ENCODE measurements at regions of chr9 and their contacts with region 1.

Region 1: GRCh38 chr9:113376634-113377567 is at the start of gene HDHD3:
- DNase-seq: peak; percentile 78
- H3K4me3 Mint-ChIP-seq: peak within 1 kb of the TSS; percentile 85
- H3K27ac Mint-ChIP-seq: peak within 1 kb of the TSS; percentile 65
- H3K4me1 Mint-ChIP-seq: peaks cover 9% of the 10 kb centered on the region
- H3K27me3 Mint-ChIP-seq: no peaks in the 10 kb centered on the region
- total RNA-seq, gene HDHD3: 18.7 and 18.8 TPM in 2 replicates

Region 2: DNA sequence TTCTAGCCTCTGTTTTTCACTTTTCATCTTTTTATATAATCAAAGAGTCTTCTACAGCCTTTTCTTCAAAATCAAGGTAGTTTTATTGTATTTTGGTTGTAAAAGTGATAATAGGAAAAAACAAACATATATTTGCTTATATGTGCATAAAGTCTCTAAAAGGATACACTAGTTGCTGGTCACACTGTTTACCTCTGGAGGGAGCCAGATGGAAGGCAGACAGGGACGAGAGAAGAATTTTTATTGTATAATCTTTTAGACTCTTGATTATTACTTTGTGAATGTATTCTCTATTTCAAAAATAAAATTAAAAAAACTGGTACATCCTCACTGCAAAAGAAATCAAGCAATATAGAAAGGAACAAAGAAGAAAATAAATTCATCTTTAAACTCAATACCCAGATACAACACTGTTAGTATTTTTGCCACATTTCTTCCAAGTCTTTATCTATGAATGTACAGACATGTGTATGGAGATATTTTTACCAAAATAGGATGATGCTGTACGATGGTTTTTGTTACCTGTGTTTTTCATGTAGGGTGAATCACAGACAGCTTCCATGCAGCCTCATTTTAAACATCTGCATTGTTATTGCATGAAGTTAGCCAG is 67.6 kb before region 1 on chr9:
- intact Hi-C with region 1: loop called (anchors 2 kb)
- DNase-seq: no peak
- H3K4me3 Mint-ChIP-seq: no peak overlapping the region
- H3K27ac Mint-ChIP-seq: no peak overlapping the region
- H3K4me1 Mint-ChIP-seq: peaks cover 12% of the 10 kb centered on the region
- H3K27me3 Mint-ChIP-seq: peaks cover 3% of the 10 kb centered on the region

Region 3: DNA sequence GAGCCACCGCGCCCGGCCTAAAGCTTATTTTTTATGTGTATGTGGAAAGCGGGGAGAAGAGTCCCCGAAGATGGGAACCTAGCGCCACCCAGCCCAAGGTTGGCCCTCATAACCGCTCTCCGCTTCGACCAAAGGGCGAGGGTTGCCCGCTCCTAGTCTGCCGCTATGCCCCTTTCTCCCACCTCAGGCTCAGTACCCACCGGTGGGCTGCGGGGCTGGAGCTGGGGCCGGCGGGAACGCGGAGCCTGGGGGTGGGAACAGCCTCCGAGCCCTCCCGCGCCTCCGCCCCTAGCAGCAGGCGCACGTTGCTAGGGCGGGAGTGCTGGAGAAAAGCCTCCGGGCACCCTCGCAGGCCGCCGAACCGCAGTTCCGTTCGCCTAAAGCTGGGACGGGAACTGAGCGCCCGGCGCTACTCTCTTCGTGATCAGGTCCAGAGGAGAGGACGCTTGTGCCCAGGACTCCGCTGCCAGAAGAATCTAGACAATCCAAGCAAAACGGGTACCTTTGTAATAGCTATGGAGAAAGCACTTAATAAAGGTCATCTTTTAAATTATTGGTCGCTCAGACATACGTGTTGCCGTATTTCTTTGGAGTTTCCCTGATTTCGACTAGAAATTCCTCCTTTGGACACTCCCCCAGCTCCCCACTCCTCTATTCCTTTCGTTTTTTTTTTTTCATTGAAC is 36.7 kb before region 1 on chr9 and contains the start of gene WDR31:
- intact Hi-C with region 1: loop called (anchors 2 kb)
- DNase-seq: peak; percentile 75
- H3K4me3 Mint-ChIP-seq: peak within 1 kb of the TSS; percentile 86
- H3K27ac Mint-ChIP-seq: peak within 1 kb of the TSS; percentile 56
- H3K4me1 Mint-ChIP-seq: peaks cover 37% of the 10 kb centered on the region
- H3K27me3 Mint-ChIP-seq: no peaks in the 10 kb centered on the region
- total RNA-seq, gene WDR31: 1.9 and 2.1 TPM in 2 replicates

Region 4: DNA sequence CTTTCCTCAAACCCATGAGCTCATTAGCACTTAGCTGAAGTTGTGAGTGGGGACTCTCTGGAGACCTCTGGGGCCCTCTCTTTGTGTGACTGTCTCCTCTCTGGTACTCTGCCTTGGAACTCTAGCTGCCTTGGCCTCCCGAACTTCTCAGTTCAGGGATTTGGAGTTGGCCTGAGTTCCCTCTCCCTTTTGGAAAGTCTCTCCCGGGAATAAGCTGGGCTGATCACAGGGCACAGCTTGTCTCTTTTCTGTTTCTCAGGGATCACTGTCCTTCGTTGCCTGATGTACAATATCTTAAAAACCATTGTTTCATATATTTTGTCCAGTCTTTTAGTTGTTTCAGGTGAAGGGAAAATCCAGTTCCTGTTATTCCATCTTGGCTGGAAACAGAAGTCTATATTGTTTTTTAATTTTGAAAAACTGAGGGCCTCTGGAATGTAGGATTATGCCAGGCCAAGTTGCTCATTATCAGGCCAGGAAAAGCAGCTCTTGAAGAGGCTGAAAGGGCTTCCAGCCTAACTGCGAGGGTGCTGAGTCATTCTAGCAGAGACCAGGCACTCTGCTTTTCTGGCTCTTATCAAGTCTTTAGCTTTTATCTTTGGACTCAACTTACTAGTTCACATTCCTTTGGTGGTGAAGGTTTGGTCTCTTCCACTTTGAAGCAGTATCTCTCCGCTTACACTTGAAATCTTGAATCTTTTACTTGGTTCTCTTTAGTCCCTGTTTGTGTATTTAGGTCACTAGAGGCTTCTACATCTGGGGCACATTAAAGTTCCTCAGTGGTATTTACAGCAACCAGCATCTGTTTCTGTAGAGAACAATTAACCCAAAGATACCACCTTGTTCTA is 78.2 kb after region 1 on chr9:
- intact Hi-C with region 1: no loop called
- DNase-seq: no peak
- H3K4me3 Mint-ChIP-seq: no peak overlapping the region
- H3K27ac Mint-ChIP-seq: no peak overlapping the region
- H3K4me1 Mint-ChIP-seq: peaks cover 11% of the 10 kb centered on the region
- H3K27me3 Mint-ChIP-seq: no peaks in the 10 kb centered on the region

Measured in activated T-helper 2 cell treated with anti-CD3 and anti-CD28 coated beads, Interferon-gamma antibody, Interleukin-2, Interleukin-4, amounts not matched to agents 10 μg/mL and 5 μg/mL and 100 μg/mL, durations not matched to agents 14 hours and 24 hours and 36 hours (primary cell).